ENCODE measurements at regions of chr2 and their contacts with region 1.

Region 1: DNA sequence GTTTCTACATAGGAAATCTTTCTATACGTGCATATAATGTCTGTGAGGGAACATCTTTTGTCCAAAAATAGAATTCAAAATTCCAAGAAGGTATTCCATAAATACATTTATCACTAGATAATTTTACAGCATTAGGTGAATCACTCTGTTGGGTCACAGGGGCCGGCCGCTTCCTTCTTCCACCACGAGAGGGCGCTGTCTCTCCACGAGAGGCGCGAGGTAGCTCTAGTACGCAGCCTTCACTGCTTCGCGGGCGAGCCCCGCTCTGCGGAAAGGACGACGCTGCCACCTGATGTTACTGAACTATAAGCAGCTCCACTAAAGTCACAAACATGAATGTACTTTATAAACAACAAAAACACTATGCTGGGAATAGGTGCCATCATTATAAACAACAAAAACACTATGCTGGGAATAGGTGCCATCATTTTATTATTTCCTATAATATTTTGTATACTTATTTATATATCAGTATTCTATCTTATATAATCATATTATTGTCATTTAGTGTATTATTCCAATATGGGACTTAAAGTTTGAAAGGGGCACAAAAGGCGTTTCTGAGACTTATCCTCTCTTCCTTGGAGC is 69.4 kb upstream of the REV1 start:
- DNase-seq: peak; percentile 77 to 92 (median 89)
- H3K4me3 ChIP-seq: no peak overlapping the region
- H3K27ac ChIP-seq: no peak overlapping the region
- H3K4me1 ChIP-seq: no peaks in the 10 kb centered on the region
- H3K27me3 ChIP-seq: no peaks in the 10 kb centered on the region
- CTCF ChIP-seq: peak; percentile 90 to 96 (median 96)
- EP300 ChIP-seq: no peak
- POLR2A ChIP-seq: no peak

Region 2: GRCh38 chr2:99624677-99625076 is 65.5 kb after region 1 on chr2:
- intact Hi-C with region 1: no loop called
- DNase-seq: no peak
- H3K4me3 ChIP-seq: no peak overlapping the region
- H3K27ac ChIP-seq: no peak overlapping the region
- H3K4me1 ChIP-seq: peaks cover 3% of the 10 kb centered on the region
- H3K27me3 ChIP-seq: no peaks in the 10 kb centered on the region
- CTCF ChIP-seq: no peak
- EP300 ChIP-seq: no peak
- POLR2A ChIP-seq: no peak

Region 3: DNA sequence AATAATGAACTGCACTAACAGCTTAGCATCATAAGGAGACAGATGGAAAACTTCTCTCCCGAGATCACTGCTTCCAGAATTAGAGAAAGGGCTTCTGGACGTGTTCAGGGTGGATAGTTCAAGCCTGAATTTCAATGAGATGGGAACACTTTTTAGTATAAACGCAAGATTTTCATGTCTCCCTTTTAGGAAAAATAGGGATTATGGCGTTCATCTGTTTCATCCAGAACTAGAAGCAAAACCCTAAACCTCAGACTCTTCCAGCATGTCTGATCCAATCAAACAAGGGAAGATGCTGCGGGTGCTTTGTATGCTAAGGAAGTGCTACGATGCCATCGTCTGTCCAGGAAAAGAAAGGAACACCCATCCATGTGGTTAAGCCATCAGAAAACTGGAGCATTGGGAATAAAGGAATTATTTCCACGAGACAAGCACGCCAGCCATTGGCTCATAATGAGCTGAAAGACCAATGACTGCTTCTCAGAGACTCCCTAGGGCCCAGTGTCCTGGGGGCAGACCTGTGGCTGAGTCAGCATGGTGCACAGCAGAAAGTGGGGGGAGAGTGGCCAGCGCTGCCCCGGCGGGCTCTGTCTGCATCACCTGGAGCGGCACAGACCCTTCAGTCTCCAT is 649.1 kb after region 1 on chr2:
- intact Hi-C with region 1: loop called in 2 of 4 experiments (anchors 5 kb)
- DNase-seq: peak in 1 of 5 donors; percentile 37
- H3K4me3 ChIP-seq: no peak overlapping the region
- H3K27ac ChIP-seq: no peak overlapping the region
- H3K4me1 ChIP-seq: peaks cover 2% of the 10 kb centered on the region
- H3K27me3 ChIP-seq: no peaks in the 10 kb centered on the region
- CTCF ChIP-seq: peak in 1 of 3 donors; percentile 38
- EP300 ChIP-seq: no peak
- POLR2A ChIP-seq: no peak

Region 4: DNA sequence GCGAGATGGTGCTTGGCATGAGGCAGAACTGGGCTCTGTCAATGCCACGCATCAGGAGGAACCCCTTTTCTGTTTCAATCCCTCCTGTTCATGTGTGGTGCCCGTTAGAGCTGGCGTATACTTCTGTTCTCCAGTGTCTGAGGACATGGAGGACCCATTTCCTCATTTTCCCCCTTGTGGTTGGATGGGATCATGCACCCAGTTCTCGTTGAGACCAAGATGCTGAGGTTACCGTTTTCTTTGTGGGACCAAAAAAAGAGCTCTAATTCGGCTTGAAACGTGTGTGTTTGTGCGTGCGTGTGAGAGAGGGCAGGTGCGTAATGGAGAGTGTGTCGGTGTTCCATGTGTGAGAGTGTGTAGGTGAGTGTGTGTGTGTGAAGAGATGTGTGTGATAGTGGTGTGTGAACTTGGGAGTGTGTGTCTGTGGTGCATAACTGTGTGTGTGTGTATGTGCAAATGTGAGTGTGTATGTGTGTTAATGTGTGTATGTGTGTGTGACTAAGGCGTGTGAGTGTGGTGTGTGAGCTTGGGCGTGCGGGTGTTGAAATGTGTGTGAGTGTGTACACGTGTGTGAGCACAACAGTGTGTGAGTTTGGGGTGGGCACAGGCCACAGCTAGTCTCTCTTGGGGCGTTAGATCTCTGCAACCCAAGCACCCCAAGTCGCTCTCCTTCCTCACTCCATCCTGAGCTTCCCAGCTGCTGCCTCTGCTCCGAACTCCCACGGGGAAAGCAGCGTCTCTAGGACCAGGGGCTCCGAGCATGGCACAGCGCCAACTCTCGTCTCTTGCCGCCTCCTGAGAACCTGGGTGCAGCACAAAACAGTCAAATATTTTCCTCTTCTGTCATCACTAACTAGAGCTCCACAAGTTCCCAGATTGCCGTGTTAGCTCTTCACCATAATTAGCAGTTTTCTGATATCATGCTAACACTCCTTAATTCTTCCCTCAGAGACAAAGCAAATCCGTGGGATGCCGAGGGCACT is 687.3 kb after region 1 on chr2:
- intact Hi-C with region 1: loop called in 1 of 4 experiments (anchors 5 kb)
- DNase-seq: no peak
- H3K4me3 ChIP-seq: no peak overlapping the region
- H3K27ac ChIP-seq: no peak overlapping the region
- H3K4me1 ChIP-seq: no peaks in the 10 kb centered on the region
- H3K27me3 ChIP-seq: no peaks in the 10 kb centered on the region
- CTCF ChIP-seq: peak in 1 of 3 donors; percentile 11
- EP300 ChIP-seq: no peak
- POLR2A ChIP-seq: no peak

Region 5: DNA sequence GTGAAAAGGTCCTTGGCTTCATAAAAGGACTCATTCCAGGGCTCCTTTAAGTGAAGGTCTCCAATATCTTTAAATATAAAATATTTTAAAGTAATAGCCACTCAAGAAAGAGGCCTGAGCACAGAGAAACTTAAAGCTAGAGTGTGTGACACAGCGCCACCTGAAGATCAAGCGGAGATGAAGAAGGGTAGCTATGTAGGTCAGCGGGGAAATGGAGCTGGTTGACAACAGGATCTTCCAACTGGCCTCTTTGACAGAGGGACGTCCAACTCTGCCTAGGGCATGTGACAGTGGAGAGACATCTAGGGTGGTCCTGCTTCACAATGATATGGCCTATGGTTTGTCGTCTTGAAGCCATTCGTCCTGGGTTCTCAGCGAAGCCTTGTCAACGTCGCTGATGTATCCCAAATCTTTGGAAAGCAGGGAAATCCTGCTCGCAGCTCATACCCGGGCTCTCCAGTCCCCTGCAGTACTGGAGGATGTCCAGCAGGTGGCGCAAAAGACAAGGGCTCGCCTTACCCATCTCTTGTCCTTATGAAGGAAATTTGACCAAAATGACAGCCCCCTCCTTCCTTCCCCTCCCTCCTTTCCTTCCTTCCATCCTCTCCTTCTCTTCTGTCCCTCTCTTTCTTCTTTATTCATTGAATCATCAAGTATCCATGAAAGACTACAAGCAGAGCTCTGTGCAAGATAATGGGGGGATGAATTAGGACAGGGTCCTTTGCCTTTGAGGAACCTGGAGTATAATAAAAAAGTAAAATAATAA is 703.6 kb after region 1 on chr2:
- intact Hi-C with region 1: loop called (anchors 5 kb)
- DNase-seq: peak; percentile 69 to 89 (median 83)
- H3K4me3 ChIP-seq: no peak overlapping the region
- H3K27ac ChIP-seq: no peak overlapping the region
- H3K4me1 ChIP-seq: no peaks in the 10 kb centered on the region
- H3K27me3 ChIP-seq: no peaks in the 10 kb centered on the region
- CTCF ChIP-seq: peak; percentile 87 to 95 (median 92)
- EP300 ChIP-seq: no peak
- POLR2A ChIP-seq: no peak

Region 6: DNA sequence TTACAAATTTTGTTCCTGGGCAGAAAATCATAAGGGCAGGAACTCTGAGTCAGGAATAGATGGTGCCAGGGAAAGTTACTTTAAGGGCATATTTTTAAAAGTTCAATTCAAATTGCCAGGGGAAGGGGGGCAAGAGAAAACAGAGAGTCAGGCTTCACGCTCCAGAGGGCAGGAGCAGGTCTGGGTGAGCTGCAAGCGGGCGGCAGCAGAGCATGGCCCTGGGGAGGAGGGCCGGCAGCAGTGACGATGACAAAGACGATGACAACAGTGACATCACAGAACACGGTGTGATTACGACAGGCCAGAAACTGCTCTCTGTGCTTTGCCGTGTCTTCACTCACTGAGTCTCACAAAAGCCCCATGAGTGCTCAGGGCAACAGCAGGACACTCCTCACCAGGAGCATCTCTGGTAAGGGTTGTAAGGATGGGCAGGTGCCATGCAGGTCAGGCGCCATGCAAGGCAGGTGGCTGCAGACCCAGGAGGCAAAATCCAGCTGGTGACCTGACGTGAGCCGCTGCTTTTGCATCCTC is 835.0 kb after region 1 on chr2:
- intact Hi-C with region 1: loop called in 2 of 4 experiments (anchors 10 kb)
- DNase-seq: no peak
- H3K4me3 ChIP-seq: no peak overlapping the region
- H3K27ac ChIP-seq: no peak overlapping the region
- H3K4me1 ChIP-seq: no peaks in the 10 kb centered on the region
- H3K27me3 ChIP-seq: no peaks in the 10 kb centered on the region
- CTCF ChIP-seq: no peak
- EP300 ChIP-seq: no peak
- POLR2A ChIP-seq: no peak

Measured in ovary (tissue), 10 donors.